CD4-positive, alpha-beta T cell (primary cell): ENCODE measurements at regions of chr10 and their contacts with region 1.

Region 1: GRCh38 chr10:94362360-94363250 is at the start of gene NOC3L:
- DNase-seq: peak; percentile 85 to 97 (median 92)
- ATAC-seq: peak; percentile 93
- H3K4me3 ChIP-seq: peak within 1 kb of the TSS; percentile 73
- H3K4me3 Mint-ChIP-seq: peak within 1 kb of the TSS; percentile 93
- H3K27ac ChIP-seq: peak within 1 kb of the TSS; percentile 75 to 87
- H3K27ac Mint-ChIP-seq: peak within 1 kb of the TSS; percentile 94
- H3K4me1 ChIP-seq: peaks cover 17% of the 10 kb centered on the region
- H3K4me1 Mint-ChIP-seq: peaks cover 51% of the 10 kb centered on the region
- H3K27me3 ChIP-seq: peaks cover 0 to 2% of the 10 kb centered on the region in 2 experiments
- H3K27me3 Mint-ChIP-seq: no peaks in the 10 kb centered on the region
- CTCF ChIP-seq: peak; percentile 97
- total RNA-seq, gene NOC3L: 7.1 to 8.0 TPM

Region 2: GRCh38 chr10:92592761-92593618 is 1769.6 kb before region 1 on chr10 and contains the start of gene KIF11:
- CTCF ChIA-PET with region 1: no interaction called
- POLR2A ChIA-PET with region 1: interaction called, 3 read pairs
- intact Hi-C with region 1: loop called in 1 of 2 experiments (anchors 10 kb)
- DNase-seq: peak; percentile 91 to 98 (median 96)
- ATAC-seq: peak; percentile 81
- H3K4me3 ChIP-seq: peak within 1 kb of the TSS; percentile 75
- H3K4me3 Mint-ChIP-seq: peak within 1 kb of the TSS; percentile 99
- H3K27ac ChIP-seq: peak within 1 kb of the TSS; percentile 84 to 89
- H3K27ac Mint-ChIP-seq: peak within 1 kb of the TSS; percentile 99
- H3K4me1 ChIP-seq: peaks cover 38% of the 10 kb centered on the region
- H3K4me1 Mint-ChIP-seq: peaks cover 29% of the 10 kb centered on the region
- H3K27me3 ChIP-seq: no peaks in the 10 kb centered on the region
- H3K27me3 Mint-ChIP-seq: no peaks in the 10 kb centered on the region
- CTCF ChIP-seq: no peak
- total RNA-seq, gene KIF11: 0.38 to 0.47 TPM

Region 3: GRCh38 chr10:93702211-93703001 is 660.2 kb before region 1 on chr10 and contains the start of gene FRA10AC1:
- CTCF ChIA-PET with region 1: no interaction called
- POLR2A ChIA-PET with region 1: no interaction called
- intact Hi-C with region 1: loop called (anchors 1 to 2 kb)
- DNase-seq: peak; percentile 80 to 93 (median 86)
- ATAC-seq: peak; percentile 81
- H3K4me3 ChIP-seq: peak within 1 kb of the TSS; percentile 87
- H3K4me3 Mint-ChIP-seq: no peak within 1 kb of the TSS
- H3K27ac ChIP-seq: peak within 1 kb of the TSS; percentile 71 to 77
- H3K27ac Mint-ChIP-seq: no peak within 1 kb of the TSS
- H3K4me1 ChIP-seq: peaks cover 5% of the 10 kb centered on the region
- H3K4me1 Mint-ChIP-seq: peaks cover 19% of the 10 kb centered on the region
- H3K27me3 ChIP-seq: no peaks in the 10 kb centered on the region
- H3K27me3 Mint-ChIP-seq: no peaks in the 10 kb centered on the region
- CTCF ChIP-seq: no peak
- total RNA-seq, gene FRA10AC1: 10.0 to 10.3 TPM

Region 4: DNA sequence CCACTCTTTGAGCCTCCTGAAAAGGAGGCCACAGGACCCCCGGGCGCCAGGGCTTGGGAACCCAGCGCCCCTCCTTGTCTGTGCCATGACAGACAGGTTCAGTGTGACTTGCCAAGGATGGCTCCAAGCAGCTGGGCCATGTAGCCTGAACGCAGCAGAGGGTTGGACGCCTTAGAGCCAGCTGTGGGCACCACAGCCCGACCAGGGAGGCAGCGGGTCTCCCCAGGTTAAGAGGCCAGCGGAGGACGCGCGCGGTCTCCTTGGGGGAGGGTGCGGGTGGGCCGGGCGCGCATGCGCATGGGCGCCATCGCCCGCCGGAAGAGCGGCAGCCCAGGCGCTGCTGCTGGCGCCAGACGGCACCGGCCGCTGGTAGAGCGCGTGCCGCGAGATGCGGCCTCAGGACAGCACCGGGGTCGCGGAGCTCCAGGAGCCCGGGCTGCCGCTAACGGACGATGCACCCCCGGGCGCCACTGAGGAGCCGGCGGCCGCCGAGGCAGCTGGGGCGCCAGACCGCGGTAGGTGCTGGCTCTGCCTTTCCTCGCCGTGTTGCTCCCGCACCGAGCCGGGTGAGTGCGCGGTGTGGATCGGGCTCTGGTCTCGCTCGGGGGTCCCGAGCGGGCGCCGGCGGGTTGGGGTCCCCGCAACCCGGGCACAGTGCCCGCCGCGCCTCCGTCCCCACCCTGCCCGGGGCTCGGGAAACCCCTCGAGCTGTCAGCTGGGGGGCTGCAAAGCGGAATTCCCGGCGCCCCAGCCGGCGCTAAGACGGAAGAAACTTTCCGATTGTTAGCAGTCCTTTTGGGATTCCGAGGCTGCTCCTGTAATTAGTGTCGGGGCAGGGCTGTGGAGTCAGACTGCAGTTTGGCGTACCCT is 468.7 kb before region 1 on chr10 and contains the start of gene SLC35G1:
- CTCF ChIA-PET with region 1: no interaction called
- POLR2A ChIA-PET with region 1: no interaction called
- intact Hi-C with region 1: loop called in 1 of 2 experiments (anchors 5 kb)
- DNase-seq: peak; percentile 42 to 87 (median 66)
- ATAC-seq: peak; percentile 91
- H3K4me3 ChIP-seq: peak within 1 kb of the TSS; percentile 68
- H3K4me3 Mint-ChIP-seq: peak within 1 kb of the TSS; percentile 91
- H3K27ac ChIP-seq: no peak within 1 kb of the TSS
- H3K27ac Mint-ChIP-seq: peak within 1 kb of the TSS; percentile 73
- H3K4me1 ChIP-seq: peaks cover 16% of the 10 kb centered on the region
- H3K4me1 Mint-ChIP-seq: peaks cover 47% of the 10 kb centered on the region
- H3K27me3 ChIP-seq: no peaks in the 10 kb centered on the region
- H3K27me3 Mint-ChIP-seq: peaks cover 8% of the 10 kb centered on the region
- CTCF ChIP-seq: no peak
- total RNA-seq, gene SLC35G1: 2.9 to 3.1 TPM

Region 5: DNA sequence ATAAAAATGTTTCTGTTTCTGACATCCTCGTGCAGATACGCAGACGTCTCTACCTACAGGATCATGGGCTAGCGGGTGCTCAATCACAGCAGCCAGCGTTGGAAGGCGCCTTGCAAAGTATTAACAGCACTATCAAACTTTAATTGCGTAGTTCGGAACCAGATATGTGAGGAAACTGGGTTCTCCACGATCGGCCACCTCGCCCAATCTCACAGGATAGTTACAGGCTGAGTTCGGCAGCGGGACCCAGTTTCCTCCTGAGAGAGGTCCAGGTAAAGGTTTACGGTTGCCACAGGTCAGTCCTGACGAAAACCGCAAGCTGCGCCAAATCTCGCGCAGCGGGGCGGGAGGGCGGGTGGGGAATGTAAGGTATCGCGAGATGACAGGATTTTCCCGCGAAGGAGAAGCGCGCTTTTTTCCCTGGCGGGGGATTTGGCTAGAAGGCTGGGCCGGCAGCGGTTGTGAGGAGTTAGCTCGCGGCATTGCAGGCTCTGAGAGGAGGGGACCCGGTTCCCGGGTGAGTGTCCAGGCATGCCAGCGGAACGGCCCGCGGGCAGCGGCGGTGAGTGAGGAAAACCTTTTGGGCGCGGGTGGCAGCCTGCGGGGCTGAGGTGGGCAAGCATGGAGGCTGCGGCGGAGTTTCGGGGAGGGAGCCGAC is 182.9 kb after region 1 on chr10 and contains the start of gene HELLS:
- CTCF ChIA-PET with region 1: no interaction called
- POLR2A ChIA-PET with region 1: no interaction called
- intact Hi-C with region 1: loop called in 1 of 2 experiments (anchors 5 kb)
- DNase-seq: peak; percentile 36 to 85 (median 54)
- ATAC-seq: peak; percentile 77
- H3K4me3 ChIP-seq: peak within 1 kb of the TSS; percentile 99
- H3K4me3 Mint-ChIP-seq: peak within 1 kb of the TSS; percentile 90
- H3K27ac ChIP-seq: peak within 1 kb of the TSS; percentile 29 to 60
- H3K27ac Mint-ChIP-seq: peak within 1 kb of the TSS; percentile 78
- H3K4me1 ChIP-seq: peaks cover 21% of the 10 kb centered on the region
- H3K4me1 Mint-ChIP-seq: peaks cover 21% of the 10 kb centered on the region
- H3K27me3 ChIP-seq: no peaks in the 10 kb centered on the region
- H3K27me3 Mint-ChIP-seq: no peaks in the 10 kb centered on the region
- CTCF ChIP-seq: no peak
- total RNA-seq, gene HELLS: 9.5 to 10.3 TPM